ENCODE measurements at regions of chr1 and their contacts with region 1.

Region 1: GRCh38 chr1:44594871-44595746 is 79.2 kb downstream of the TMEM53 start:
- DNase-seq: peak; percentile 78 to 84
- H3K4me3 ChIP-seq: no peak overlapping the region
- H3K4me3 Mint-ChIP-seq: no peak overlapping the region
- H3K27ac Mint-ChIP-seq: no peak overlapping the region
- H3K4me1 ChIP-seq: peaks cover 5% of the 10 kb centered on the region; the same call in 1 of the 2 replicates
- H3K4me1 Mint-ChIP-seq: no peaks in the 10 kb centered on the region
- H3K27me3 ChIP-seq: no peaks in the 10 kb centered on the region
- H3K27me3 Mint-ChIP-seq: peaks cover 7% of the 10 kb centered on the region
- CTCF ChIP-seq: peak; percentile 88 to 94

Region 2: DNA sequence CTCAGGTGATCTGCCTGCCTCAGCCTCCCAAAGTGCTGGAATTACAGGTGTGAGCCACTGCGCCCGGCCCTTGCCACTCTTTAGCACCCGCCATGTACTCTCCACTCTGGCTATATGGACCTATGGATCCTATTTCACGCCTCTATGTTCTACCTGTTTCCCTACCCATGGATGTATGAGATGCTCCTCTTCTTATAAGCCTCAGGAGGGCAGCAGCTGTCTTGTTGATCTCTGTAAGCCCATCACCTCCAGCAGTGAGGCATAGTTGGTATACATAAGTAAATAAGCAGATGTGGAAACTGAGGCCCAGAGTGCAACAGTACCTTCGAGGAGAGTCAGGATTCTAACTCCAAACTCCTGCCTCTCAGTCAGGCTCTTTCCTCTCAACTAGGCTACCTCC is 686.2 kb before region 1 on chr1:
- CTCF ChIA-PET with region 1: no interaction called
- POLR2A ChIA-PET with region 1: no interaction called
- intact Hi-C with region 1: loop called (anchors 10 kb)
- DNase-seq: no peak
- H3K4me3 ChIP-seq: no peak overlapping the region
- H3K4me3 Mint-ChIP-seq: no peak overlapping the region
- H3K27ac Mint-ChIP-seq: no peak overlapping the region
- H3K4me1 ChIP-seq: no peaks in the 10 kb centered on the region
- H3K4me1 Mint-ChIP-seq: peaks cover 11% of the 10 kb centered on the region
- H3K27me3 ChIP-seq: no peaks in the 10 kb centered on the region
- H3K27me3 Mint-ChIP-seq: peaks cover 14% of the 10 kb centered on the region
- CTCF ChIP-seq: no peak

Region 3: DNA sequence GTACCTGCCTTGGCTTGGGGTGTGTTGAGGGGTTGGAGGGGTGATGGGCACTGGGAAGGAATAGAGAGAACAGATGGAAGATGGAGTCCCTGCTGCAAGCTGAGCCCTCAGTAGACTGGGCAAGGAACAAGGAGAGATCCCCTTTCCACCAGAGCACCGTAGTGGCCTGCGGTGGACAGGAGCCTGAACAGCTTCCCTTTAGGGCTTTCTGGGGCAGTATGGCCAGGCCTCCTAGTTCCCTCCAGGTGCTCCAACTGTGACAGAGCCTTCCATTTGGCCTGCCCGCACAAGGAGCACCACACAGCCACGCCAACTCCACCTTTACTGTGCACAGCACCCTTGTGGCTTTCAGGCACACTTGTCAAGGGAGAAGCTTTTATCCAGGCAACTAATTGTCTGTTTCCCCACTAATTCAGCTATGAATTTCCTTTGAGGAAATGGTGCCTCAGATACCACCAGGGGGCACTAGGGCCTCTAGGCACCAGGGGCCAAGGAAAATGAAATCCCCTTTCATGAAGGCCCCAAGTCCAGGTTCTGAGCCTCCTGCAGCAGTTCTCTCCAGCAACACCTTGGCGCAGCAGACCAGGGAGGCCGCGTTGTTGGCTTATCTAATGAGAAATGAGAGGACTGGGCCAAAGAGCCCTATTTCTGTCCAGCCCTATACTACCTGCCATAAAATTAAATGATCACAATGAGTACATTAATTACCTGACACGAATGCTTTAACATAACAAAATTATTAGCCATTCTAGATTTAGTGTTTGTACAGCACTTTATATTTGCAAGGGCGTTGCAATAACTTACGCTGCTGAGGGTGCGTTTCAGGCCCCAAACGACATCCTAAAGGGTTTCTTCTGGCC is 217.0 kb before region 1 on chr1:
- CTCF ChIA-PET with region 1: interaction called, 10 read pairs
- POLR2A ChIA-PET with region 1: no interaction called
- intact Hi-C with region 1: loop called (anchors 1 kb)
- DNase-seq: peak; percentile 40 to 44
- H3K4me3 ChIP-seq: no peak overlapping the region
- H3K4me3 Mint-ChIP-seq: no peak overlapping the region
- H3K27ac Mint-ChIP-seq: no peak overlapping the region
- H3K4me1 ChIP-seq: no peaks in the 10 kb centered on the region
- H3K4me1 Mint-ChIP-seq: no peaks in the 10 kb centered on the region
- H3K27me3 ChIP-seq: no peaks in the 10 kb centered on the region
- H3K27me3 Mint-ChIP-seq: no peaks in the 10 kb centered on the region
- CTCF ChIP-seq: peak; percentile 52 to 66

Region 4: GRCh38 chr1:44524655-44525500 is 70.2 kb before region 1 on chr1:
- CTCF ChIA-PET with region 1: no interaction called
- POLR2A ChIA-PET with region 1: no interaction called
- intact Hi-C with region 1: no loop called
- DNase-seq: no peak
- H3K4me3 ChIP-seq: no peak overlapping the region
- H3K4me3 Mint-ChIP-seq: no peak overlapping the region
- H3K27ac Mint-ChIP-seq: no peak overlapping the region
- H3K4me1 ChIP-seq: no peaks in the 10 kb centered on the region
- H3K4me1 Mint-ChIP-seq: no peaks in the 10 kb centered on the region
- H3K27me3 ChIP-seq: no peaks in the 10 kb centered on the region
- H3K27me3 Mint-ChIP-seq: no peaks in the 10 kb centered on the region
- CTCF ChIP-seq: no peak

Region 5: GRCh38 chr1:44571712-44572571 is 23.2 kb before region 1 on chr1:
- CTCF ChIA-PET with region 1: interaction called, 11 read pairs
- POLR2A ChIA-PET with region 1: no interaction called
- intact Hi-C with region 1: loop called (anchors 1 kb)
- DNase-seq: peak in 1 of 2 experiments; percentile 6
- H3K4me3 ChIP-seq: no peak overlapping the region
- H3K4me3 Mint-ChIP-seq: no peak overlapping the region
- H3K27ac Mint-ChIP-seq: no peak overlapping the region
- H3K4me1 ChIP-seq: peaks cover 14% of the 10 kb centered on the region
- H3K4me1 Mint-ChIP-seq: peaks cover 10% of the 10 kb centered on the region
- H3K27me3 ChIP-seq: no peaks in the 10 kb centered on the region
- H3K27me3 Mint-ChIP-seq: no peaks in the 10 kb centered on the region
- CTCF ChIP-seq: peak in 1 of 2 experiments; percentile 60

Measured in Caco-2 (cell line).